ENCODE measurements at regions of chr9 and their contacts with region 1.

Region 1: DNA sequence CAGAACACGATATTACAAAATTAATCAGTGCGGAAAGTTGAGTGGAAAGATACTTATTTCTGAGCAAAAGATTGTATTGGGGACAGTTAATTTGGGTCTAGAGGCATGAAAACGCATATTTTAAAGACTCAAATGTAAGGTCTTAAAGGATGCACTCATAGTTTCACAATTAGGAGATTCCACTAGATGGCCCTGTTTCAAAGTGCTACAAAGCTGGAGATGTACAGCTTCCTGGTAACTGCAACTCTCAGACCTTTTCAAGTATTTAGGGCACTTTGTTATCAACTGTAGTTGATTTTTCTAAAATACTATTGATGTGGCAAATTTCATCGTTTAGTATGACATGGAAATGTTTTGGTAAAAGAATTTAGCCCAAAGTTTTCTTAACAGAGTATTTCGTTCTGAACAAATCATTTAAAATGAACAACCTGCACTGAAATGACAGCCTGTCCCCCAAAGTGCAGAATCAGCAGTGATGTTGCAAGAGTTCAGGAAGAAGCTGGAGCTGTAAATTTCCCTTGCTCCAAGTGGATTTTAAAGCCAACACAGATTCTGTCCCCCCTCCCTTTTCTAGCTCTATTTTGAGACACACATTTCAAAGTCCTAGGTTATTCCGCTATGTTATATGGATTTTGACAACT is 16.2 kb upstream of the NDUFB6 start:
- DNase-seq: no peak
- ATAC-seq: peak; percentile 89
- H3K4me3 ChIP-seq: no peak overlapping the region
- H3K27ac ChIP-seq: no peak overlapping the region
- H3K4me1 ChIP-seq: no peaks in the 10 kb centered on the region
- H3K27me3 ChIP-seq: peaks cover 3% of the 10 kb centered on the region; the same call in 1 of the 2 replicates
- CTCF ChIP-seq: peak; percentile 68; the same call in 1 of the 2 replicates

Region 2: GRCh38 chr9:32703635-32704034 is 114.4 kb after region 1 on chr9:
- CTCF ChIA-PET with region 1: interaction called, 3 read pairs
- POLR2A ChIA-PET with region 1: no interaction called
- in situ Hi-C with region 1: no loop called
- intact Hi-C with region 1: loop called (anchors 10 kb)
- DNase-seq: peak; percentile 4
- ATAC-seq: 0 out of 2 replicates have a peak, but pooled peaks have one; percentile 56
- H3K4me3 ChIP-seq: no peak overlapping the region
- H3K27ac ChIP-seq: no peak overlapping the region
- H3K4me1 ChIP-seq: no peaks in the 10 kb centered on the region
- H3K27me3 ChIP-seq: no peaks in the 10 kb centered on the region
- CTCF ChIP-seq: peak; percentile 51